WTC11 (cell line): ENCODE measurements at regions of chr7 and their contacts with region 1.

Region 1: DNA sequence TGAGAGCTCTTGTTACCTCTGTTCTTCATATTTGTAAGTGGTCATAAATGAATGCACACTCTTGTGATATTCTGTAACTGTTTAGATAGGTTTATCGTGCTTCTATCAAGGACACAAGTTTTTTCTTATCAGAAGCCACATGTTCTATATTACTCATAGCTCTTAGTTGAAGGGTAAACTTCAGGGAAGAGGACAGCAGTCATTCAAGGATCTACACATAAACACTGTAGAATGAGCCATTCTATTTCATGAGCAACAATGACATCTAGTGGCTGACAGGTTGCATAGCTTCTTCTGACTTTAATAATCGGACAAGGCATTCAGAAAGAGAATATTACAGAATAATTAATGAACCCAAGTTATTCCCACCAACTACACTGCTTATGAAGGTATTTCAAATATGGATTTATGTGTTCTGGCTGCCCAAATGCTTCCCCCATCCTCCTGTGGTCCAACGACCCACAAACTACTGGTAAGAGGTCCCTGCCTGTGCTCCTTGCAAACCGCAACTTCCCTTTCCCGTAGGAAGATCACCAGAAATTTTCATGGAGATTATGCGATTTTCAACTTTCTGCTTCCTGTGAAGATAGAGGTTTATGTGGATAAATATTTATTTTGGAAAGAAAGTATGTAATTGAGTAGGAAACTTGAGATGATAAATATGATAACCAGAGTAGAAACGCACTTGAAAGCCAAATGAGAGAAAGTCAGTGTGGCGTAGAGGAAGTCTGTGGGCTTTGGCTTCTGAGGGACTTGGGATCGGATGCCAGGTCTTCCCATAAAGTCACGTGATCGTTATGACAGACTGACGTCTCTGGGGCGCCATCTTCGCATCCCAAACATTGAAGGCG is 16.8 kb upstream of the ABCB5 start:
- DNase-seq: no peak
- ATAC-seq: peak; percentile 76
- H3K4me3 Mint-ChIP-seq: no peak overlapping the region
- H3K27ac Mint-ChIP-seq: no peak overlapping the region
- H3K4me1 Mint-ChIP-seq: peaks cover 16% of the 10 kb centered on the region
- H3K27me3 Mint-ChIP-seq: no peaks in the 10 kb centered on the region
- CTCF ChIP-seq: peak; percentile 58

Region 2: GRCh38 chr7:19708397-19709248 is 890.1 kb before region 1 on chr7 and contains the start of gene POLR1F:
- CTCF ChIA-PET with region 1: interaction called, 42 read pairs
- POLR2A ChIA-PET with region 1: interaction called, 3 read pairs
- DNase-seq: peak; percentile 92
- ATAC-seq: peak; percentile 90
- H3K4me3 Mint-ChIP-seq: peak within 1 kb of the TSS; percentile 94
- H3K27ac Mint-ChIP-seq: peak within 1 kb of the TSS; percentile 93
- H3K4me1 Mint-ChIP-seq: peaks cover 34% of the 10 kb centered on the region
- H3K27me3 Mint-ChIP-seq: peaks cover 6% of the 10 kb centered on the region
- CTCF ChIP-seq: peak; percentile 74
- total RNA-seq, gene POLR1F: 18.6 to 22.3 TPM (median 19.2 TPM) in 3 replicates

Region 3: DNA sequence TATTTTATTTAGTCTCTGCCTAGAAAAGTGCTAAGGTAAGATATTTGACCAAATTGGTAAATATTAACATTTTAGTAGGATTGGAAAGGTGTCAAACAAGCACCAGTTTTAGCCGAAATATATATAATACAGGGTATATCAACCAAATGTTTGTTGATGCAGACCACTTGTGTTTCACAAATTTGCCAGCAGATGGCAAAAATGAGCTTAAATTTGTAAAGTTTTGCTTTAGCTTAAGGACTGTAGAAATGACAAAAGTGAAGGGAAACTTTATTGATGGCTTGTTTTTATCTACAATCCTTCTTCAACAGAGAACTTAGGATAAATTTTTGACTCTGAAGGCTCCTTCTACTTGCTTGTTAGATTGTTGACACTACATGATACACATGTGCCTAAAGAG is 885.0 kb before region 1 on chr7:
- CTCF ChIA-PET with region 1: interaction called, 42 read pairs
- POLR2A ChIA-PET with region 1: interaction called, 3 read pairs
- DNase-seq: peak; percentile 29
- ATAC-seq: no peak
- H3K4me3 Mint-ChIP-seq: no peak overlapping the region
- H3K27ac Mint-ChIP-seq: no peak overlapping the region
- H3K4me1 Mint-ChIP-seq: peaks cover 6% of the 10 kb centered on the region; the same call in 1 of the 2 replicates
- H3K27me3 Mint-ChIP-seq: peaks cover 6% of the 10 kb centered on the region
- CTCF ChIP-seq: peak; percentile 33; the same call in 1 of the 2 replicates

Region 4: DNA sequence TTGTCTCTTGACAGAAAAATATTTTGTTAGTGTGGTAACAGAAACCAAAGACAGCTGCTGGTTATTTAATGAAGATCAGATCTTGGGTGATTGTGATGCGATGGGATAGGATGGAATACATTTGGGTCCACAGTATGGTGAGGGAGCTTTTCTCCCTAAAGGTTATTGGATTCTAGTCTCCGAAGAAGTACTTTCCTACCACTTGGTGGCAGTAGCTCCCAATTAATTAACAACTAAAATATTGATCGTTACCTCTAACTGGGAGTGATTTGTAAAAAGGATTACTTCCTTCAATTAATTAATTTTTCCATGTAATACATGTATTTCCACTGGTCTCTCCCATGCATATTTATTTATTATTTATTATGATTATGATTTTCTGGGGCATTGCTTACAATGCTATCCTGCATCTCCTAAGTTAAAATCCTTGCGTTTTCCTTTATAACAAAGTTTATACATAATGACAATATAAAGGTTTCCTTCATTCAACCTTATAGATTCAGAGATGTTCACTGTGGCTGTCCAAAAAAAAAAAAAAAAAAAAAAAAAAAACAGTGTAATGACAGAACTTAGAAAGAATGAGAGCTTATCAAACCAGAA is 850.8 kb before region 1 on chr7:
- CTCF ChIA-PET with region 1: interaction called, 27 read pairs
- POLR2A ChIA-PET with region 1: no interaction called
- DNase-seq: no peak
- ATAC-seq: peak; percentile 85
- H3K4me3 Mint-ChIP-seq: no peak overlapping the region
- H3K27ac Mint-ChIP-seq: no peak overlapping the region
- H3K4me1 Mint-ChIP-seq: 0 out of 2 replicates have a peak, but pooled peaks cover 3% of the 10 kb centered on the region
- H3K27me3 Mint-ChIP-seq: no peaks in the 10 kb centered on the region
- CTCF ChIP-seq: peak; percentile 36

Region 5: GRCh38 chr7:20330240-20330927 is 268.3 kb before region 1 on chr7 and contains the start of gene ITGB8:
- CTCF ChIA-PET with region 1: interaction called, 12 read pairs
- POLR2A ChIA-PET with region 1: interaction called, 3 read pairs
- DNase-seq: peak; percentile 64
- ATAC-seq: peak; percentile 73
- H3K4me3 Mint-ChIP-seq: peak within 1 kb of the TSS; percentile 93
- H3K27ac Mint-ChIP-seq: peak within 1 kb of the TSS; percentile 92
- H3K4me1 Mint-ChIP-seq: peaks cover 15% of the 10 kb centered on the region
- H3K27me3 Mint-ChIP-seq: peaks cover 20% of the 10 kb centered on the region
- CTCF ChIP-seq: no peak
- total RNA-seq, gene ITGB8: 1.8 to 2.2 TPM (median 1.9 TPM) in 3 replicates

Region 6: DNA sequence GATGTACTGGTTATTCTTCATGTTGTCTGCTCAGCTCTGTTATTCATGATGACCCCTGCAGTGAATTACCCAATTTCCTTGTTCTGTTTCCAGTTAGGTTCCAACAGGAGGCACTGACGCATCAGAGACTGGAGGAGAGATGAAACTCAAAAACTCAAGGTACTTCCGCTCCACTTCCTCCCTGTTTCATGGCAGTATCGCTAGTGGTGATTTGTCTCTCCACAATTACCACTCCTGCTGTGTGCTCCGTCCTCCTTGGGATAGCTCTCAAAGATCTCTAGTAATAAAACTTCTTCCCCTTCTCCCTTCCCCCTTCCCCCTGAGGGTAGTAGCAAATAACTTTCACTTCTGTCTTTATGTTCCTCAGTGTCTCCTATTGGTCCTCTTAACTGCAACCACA is 90.6 kb before region 1 on chr7:
- CTCF ChIA-PET with region 1: interaction called, 26 read pairs
- POLR2A ChIA-PET with region 1: no interaction called
- DNase-seq: no peak
- ATAC-seq: peak; percentile 68
- H3K4me3 Mint-ChIP-seq: no peak overlapping the region
- H3K27ac Mint-ChIP-seq: no peak overlapping the region
- H3K4me1 Mint-ChIP-seq: peaks cover 9% of the 10 kb centered on the region; the same call in 1 of the 2 replicates
- H3K27me3 Mint-ChIP-seq: no peaks in the 10 kb centered on the region
- CTCF ChIP-seq: no peak

Region 7: GRCh38 chr7:20539201-20539600 is 59.5 kb before region 1 on chr7:
- CTCF ChIA-PET with region 1: interaction called, 33 read pairs
- POLR2A ChIA-PET with region 1: no interaction called
- DNase-seq: no peak
- ATAC-seq: peak; percentile 88
- H3K4me3 Mint-ChIP-seq: no peak overlapping the region
- H3K27ac Mint-ChIP-seq: no peak overlapping the region
- H3K4me1 Mint-ChIP-seq: peaks cover 12% of the 10 kb centered on the region
- H3K27me3 Mint-ChIP-seq: no peaks in the 10 kb centered on the region
- CTCF ChIP-seq: 0 out of 2 replicates have a peak, but pooled peaks have one; percentile 11

Region 8: DNA sequence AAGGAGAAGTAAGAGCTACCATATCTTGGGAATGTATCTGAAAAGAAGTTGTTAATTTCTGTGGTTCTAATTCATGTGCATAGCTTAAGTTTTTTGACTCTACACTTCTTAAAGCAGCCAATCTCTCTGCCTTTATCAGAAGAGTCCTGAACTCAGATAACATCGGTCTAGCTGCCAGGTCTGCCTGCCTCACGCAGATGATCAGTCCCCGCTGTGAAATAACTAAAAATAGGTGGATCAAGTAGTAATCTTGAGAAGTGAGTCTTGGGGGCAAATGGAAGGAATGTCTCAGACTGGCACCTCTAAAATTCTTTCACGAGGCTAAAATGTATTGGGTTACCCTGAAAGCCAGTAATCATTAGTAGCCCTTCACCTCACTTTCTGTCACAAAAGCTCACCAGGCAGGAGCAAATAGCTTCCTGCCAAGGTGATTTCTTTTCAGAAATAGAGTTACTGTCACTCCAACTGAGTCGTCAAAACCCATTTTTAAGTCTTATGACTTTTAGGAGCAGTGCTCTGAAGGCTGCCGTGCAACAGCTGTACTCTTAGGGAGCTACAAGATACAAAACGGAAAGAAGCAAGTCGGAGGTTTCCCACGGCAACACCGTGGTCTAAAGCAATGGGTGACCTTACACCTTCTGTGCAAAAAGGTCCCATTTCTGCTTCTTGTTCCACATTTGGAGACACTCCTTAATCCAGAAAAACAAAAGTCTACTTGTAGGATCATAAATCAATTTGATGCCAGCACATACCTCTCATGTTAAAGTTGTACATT is 102.0 kb after region 1 on chr7:
- CTCF ChIA-PET with region 1: no interaction called
- POLR2A ChIA-PET with region 1: no interaction called
- DNase-seq: no peak
- ATAC-seq: no peak
- H3K4me3 Mint-ChIP-seq: no peak overlapping the region
- H3K27ac Mint-ChIP-seq: no peak overlapping the region
- H3K4me1 Mint-ChIP-seq: peaks cover 9% of the 10 kb centered on the region
- H3K27me3 Mint-ChIP-seq: no peaks in the 10 kb centered on the region; the same call in 1 of the 2 replicates
- CTCF ChIP-seq: no peak

Region 9: DNA sequence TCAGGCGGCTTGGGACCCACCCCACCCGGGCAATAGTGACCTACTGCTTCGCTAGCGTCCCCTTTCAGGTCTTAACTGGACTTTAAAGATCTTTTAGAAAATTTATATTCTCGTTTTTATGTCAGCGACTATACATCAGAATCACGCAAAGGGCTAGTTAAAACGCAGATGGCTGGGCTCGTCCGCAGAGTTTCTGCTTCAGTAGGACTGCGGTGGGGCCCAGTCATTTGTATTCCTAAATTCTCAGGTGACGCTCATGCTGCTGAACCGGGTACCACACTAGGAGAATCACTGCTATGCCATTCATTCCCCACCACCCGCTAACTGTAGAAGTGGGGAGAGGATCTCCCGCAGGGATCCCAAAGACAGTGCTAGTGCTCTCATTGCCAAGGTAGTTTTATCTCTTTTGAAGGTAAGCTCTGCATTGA is 200.0 kb after region 1 on chr7:
- CTCF ChIA-PET with region 1: no interaction called
- POLR2A ChIA-PET with region 1: no interaction called
- DNase-seq: peak; percentile 58
- ATAC-seq: peak; percentile 38
- H3K4me3 Mint-ChIP-seq: peak overlapping the region; percentile 77
- H3K27ac Mint-ChIP-seq: peak overlapping the region; percentile 93
- H3K4me1 Mint-ChIP-seq: peaks cover 60% of the 10 kb centered on the region
- H3K27me3 Mint-ChIP-seq: peaks cover 18% of the 10 kb centered on the region
- CTCF ChIP-seq: no peak

Region 10: GRCh38 chr7:20945451-20945850 is 346.8 kb after region 1 on chr7:
- CTCF ChIA-PET with region 1: no interaction called
- POLR2A ChIA-PET with region 1: no interaction called
- DNase-seq: no peak
- ATAC-seq: no peak
- H3K4me3 Mint-ChIP-seq: no peak overlapping the region
- H3K27ac Mint-ChIP-seq: no peak overlapping the region
- H3K4me1 Mint-ChIP-seq: no peaks in the 10 kb centered on the region
- H3K27me3 Mint-ChIP-seq: no peaks in the 10 kb centered on the region
- CTCF ChIP-seq: no peak